GM12878 (cell line): ENCODE measurements at regions of chrX and their contacts with region 1.

Region 1: DNA sequence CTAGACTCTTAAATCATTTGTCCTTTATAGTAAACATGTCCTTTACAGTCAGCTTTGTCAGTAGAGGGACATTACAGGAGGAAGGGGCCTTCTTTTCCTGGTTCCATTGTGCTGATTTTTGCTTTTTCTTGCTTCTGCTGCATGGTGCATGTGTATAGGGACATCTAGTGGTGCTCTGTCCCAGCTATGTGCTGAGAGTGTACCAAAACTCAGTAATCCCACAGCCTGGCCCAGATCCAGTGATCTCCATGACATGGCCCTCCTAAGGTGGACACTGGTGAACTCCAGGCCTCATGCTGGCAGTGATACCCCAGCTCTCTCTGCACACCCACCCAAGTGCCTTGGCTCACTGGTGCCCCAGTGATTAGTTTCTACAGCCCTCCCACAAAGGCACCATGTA is 45.2 kb downstream of the MAGEB17 start:
- DNase-seq: no peak
- ATAC-seq: peak; percentile 84
- H3K4me3 ChIP-seq: no peak overlapping the region
- H3K27ac ChIP-seq: no peak overlapping the region
- H3K4me1 ChIP-seq: no peaks in the 10 kb centered on the region
- H3K27me3 ChIP-seq: no peaks in the 10 kb centered on the region
- CTCF ChIP-seq: peak; percentile 39 to 48 (median 45); a peak in 4 of 6 replicates
- EP300 ChIP-seq: no peak
- POLR2A ChIP-seq: no peak
- RAD21 ChIP-seq: peak; percentile 63

Region 2: GRCh38 chrX:15686818-15687685 is 525.4 kb before region 1 on chrX:
- CTCF ChIA-PET with region 1: no interaction called
- POLR2A ChIA-PET with region 1: no interaction called
- RAD21 ChIA-PET with region 1: no interaction called
- SMC1A ChIA-PET with region 1: interaction called, 3 read pairs
- in situ Hi-C with region 1: no loop called
- intact Hi-C with region 1: loop called (anchors 1 kb)
- DNase-seq: peak; percentile 34
- ATAC-seq: peak; percentile 97
- H3K4me3 ChIP-seq: no peak overlapping the region
- H3K27ac ChIP-seq: no peak overlapping the region
- H3K4me1 ChIP-seq: no peaks in the 10 kb centered on the region
- H3K27me3 ChIP-seq: no peaks in the 10 kb centered on the region
- CTCF ChIP-seq: peak; percentile 85
- EP300 ChIP-seq: no peak
- POLR2A ChIP-seq: no peak
- RAD21 ChIP-seq: peak; percentile 74

Region 3: DNA sequence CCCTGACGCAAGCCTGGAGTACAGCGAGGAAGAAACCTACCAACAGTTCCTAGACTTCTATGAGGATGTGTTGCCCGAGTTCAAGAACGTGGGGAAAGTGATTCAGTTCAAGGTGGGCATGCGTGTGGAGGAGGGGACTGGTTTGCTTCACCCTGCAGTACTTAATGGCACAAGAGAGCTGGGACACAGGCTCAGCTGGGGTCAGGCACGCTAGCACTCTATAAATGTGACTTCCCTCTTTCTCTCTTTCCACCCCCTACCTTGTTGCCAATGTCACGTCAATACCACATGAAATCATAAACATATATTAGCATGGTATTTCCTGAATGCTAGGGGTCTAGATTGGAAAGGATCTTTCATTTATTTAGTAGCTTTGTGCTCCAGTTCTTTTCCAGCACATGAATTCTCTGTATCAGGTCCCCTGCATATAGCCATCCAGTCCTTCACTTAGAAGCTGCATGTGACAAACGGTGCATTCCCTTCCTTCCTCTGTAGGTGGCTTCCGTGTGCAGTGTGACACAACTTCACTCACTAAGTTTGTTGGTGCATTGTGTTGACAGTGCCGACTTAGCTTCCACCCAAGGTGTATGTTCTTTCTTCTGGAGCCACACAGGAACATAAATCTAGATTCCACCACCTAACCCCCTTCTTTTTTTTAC is 396.5 kb before region 1 on chrX:
- CTCF ChIA-PET with region 1: no interaction called
- POLR2A ChIA-PET with region 1: no interaction called
- RAD21 ChIA-PET with region 1: interaction called, 3 read pairs
- SMC1A ChIA-PET with region 1: interaction called, 4 read pairs
- in situ Hi-C with region 1: no loop called
- intact Hi-C with region 1: loop called (anchors 5 kb)
- DNase-seq: peak; percentile 8
- ATAC-seq: peak; percentile 96
- H3K4me3 ChIP-seq: no peak overlapping the region
- H3K27ac ChIP-seq: no peak overlapping the region
- H3K4me1 ChIP-seq: peaks cover 6% of the 10 kb centered on the region; the same call in 1 of the 2 replicates
- H3K27me3 ChIP-seq: no peaks in the 10 kb centered on the region
- CTCF ChIP-seq: peak; percentile 45 to 51 (median 49); a peak in 5 of 6 replicates
- EP300 ChIP-seq: no peak
- POLR2A ChIP-seq: no peak
- RAD21 ChIP-seq: peak; percentile 40; the same call in 1 of the 2 replicates

Region 4: DNA sequence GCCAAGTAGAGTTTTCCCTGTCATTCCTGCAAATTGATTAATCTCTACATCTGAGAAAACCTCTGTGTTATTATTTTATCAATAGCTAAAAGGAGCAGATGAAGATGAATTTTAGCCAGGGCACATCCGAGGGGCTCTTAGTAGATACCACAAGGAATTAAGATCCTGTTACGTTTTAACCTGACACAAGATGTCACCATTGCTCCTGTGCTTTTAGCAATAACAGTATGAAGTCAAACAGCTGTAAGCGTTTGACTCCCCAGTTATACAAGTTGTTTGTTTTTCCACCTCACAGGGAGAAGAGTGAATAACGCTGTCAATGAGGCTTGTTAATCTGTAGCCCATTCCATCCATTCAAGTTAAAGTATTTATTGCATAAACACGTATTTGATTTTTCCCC is 281.9 kb before region 1 on chrX:
- CTCF ChIA-PET with region 1: interaction called, 19 read pairs
- POLR2A ChIA-PET with region 1: no interaction called
- RAD21 ChIA-PET with region 1: interaction called, 17 read pairs
- SMC1A ChIA-PET with region 1: interaction called, 14 read pairs
- in situ Hi-C with region 1: no loop called
- intact Hi-C with region 1: loop called (anchors 5 kb)
- DNase-seq: peak; percentile 13
- ATAC-seq: peak; percentile 71
- H3K4me3 ChIP-seq: no peak overlapping the region
- H3K27ac ChIP-seq: no peak overlapping the region
- H3K4me1 ChIP-seq: no peaks in the 10 kb centered on the region
- H3K27me3 ChIP-seq: no peaks in the 10 kb centered on the region
- CTCF ChIP-seq: peak; percentile 22 to 29 (median 27); a peak in 3 of 6 replicates
- EP300 ChIP-seq: no peak
- POLR2A ChIP-seq: no peak
- RAD21 ChIP-seq: peak; percentile 73

Region 5: DNA sequence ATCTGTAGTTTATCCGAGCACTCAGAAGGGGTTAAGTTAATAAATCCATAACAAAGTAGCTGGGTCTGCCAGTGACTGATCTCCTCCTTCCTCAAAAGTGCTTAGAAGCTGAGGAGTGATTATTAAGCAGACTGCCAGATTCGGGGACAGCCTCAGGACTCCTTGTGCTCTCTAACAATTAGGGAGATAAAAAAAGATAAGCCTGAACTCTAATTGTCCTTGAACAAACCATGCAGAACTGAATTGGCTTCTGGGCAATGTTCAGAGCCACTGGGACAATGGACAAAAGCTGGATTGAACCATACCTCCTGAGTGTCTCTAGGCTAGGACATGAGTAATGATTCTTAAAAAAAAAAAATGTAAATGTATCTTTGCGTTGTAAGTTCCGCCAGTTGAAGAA is 111.8 kb before region 1 on chrX:
- CTCF ChIA-PET with region 1: no interaction called
- POLR2A ChIA-PET with region 1: no interaction called
- RAD21 ChIA-PET with region 1: no interaction called
- SMC1A ChIA-PET with region 1: no interaction called
- in situ Hi-C with region 1: no loop called
- intact Hi-C with region 1: no loop called
- DNase-seq: no peak
- ATAC-seq: no peak
- H3K4me3 ChIP-seq: no peak overlapping the region
- H3K27ac ChIP-seq: no peak overlapping the region
- H3K4me1 ChIP-seq: peaks cover 3% of the 10 kb centered on the region; the same call in 1 of the 2 replicates
- H3K27me3 ChIP-seq: no peaks in the 10 kb centered on the region
- CTCF ChIP-seq: no peak
- EP300 ChIP-seq: no peak
- POLR2A ChIP-seq: no peak
- RAD21 ChIP-seq: no peak

Region 6: DNA sequence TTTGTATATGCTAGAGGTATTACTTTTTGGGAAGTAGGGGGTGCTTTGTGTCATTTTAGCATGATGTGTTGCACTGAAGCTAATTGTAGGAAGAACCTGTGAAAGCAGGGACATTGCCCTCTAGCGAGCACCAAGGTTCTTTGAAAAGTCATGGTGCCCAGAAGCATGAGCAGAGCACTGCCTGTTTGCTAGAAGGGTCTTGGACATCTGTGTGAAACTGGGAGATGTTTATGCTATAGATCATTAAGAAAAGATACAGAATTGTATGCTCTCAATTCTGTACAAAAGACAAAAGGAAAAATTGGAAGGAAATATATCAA is 74.4 kb before region 1 on chrX:
- CTCF ChIA-PET with region 1: interaction called, 14 read pairs
- POLR2A ChIA-PET with region 1: no interaction called
- RAD21 ChIA-PET with region 1: no interaction called
- SMC1A ChIA-PET with region 1: interaction called, 17 read pairs
- in situ Hi-C with region 1: no loop called
- intact Hi-C with region 1: loop called (anchors 5 kb)
- DNase-seq: peak; percentile 16
- ATAC-seq: peak; percentile 82
- H3K4me3 ChIP-seq: no peak overlapping the region
- H3K27ac ChIP-seq: no peak overlapping the region
- H3K4me1 ChIP-seq: peaks cover 3% of the 10 kb centered on the region
- H3K27me3 ChIP-seq: peaks cover 0 to 2% of the 10 kb centered on the region in 2 experiments; a peak in 3 of 4 replicates
- CTCF ChIP-seq: peak; percentile 44 to 52 (median 51); a peak in 5 of 6 replicates
- EP300 ChIP-seq: no peak
- POLR2A ChIP-seq: no peak
- RAD21 ChIP-seq: peak; percentile 57